ENCODE measurements at regions of chr3 and their contacts with region 1.

Region 1: GRCh38 chr3:156561533-156561932 is 6.6 kb upstream of the SSR3 start:
- DNase-seq: no peak
- ATAC-seq: no peak
- H3K4me3 ChIP-seq: no peak overlapping the region
- H3K27ac ChIP-seq: no peak overlapping the region
- H3K4me1 ChIP-seq: peaks cover 0 to 17% (median 1%) of the 10 kb centered on the region in 12 donors
- H3K27me3 ChIP-seq: peaks cover 0 to 3% (median 0%) of the 10 kb centered on the region in 9 donors
- CTCF ChIP-seq: no peak
- POLR2A ChIP-seq: no peak

Region 2: DNA sequence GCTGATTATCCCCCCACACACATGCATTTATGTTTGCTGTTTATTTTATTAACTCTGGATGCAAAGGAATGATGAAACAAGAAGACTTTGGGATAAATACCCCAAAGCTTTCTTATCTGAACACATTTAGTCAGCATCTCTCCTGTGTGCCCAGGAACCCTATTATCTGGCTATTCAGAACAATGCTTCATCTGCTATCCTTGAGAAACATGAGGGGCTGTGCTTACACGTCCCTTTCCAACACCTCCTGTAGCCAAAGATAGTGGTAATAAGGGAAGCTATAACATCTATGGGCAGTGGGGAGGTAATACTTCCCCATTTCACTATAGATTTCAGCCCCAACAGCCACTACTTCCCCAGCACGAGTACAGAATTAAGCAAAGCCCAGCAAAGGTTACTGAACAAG is 101.3 kb before region 1 on chr3:
- intact Hi-C with region 1: no loop called
- DNase-seq: no peak
- ATAC-seq: no peak
- H3K4me3 ChIP-seq: no peak overlapping the region
- H3K27ac ChIP-seq: no peak overlapping the region
- H3K4me1 ChIP-seq: peaks cover 0 to 17% (median 5%) of the 10 kb centered on the region in 12 donors
- H3K27me3 ChIP-seq: no peaks in the 10 kb centered on the region
- CTCF ChIP-seq: no peak
- POLR2A ChIP-seq: no peak

Region 3: DNA sequence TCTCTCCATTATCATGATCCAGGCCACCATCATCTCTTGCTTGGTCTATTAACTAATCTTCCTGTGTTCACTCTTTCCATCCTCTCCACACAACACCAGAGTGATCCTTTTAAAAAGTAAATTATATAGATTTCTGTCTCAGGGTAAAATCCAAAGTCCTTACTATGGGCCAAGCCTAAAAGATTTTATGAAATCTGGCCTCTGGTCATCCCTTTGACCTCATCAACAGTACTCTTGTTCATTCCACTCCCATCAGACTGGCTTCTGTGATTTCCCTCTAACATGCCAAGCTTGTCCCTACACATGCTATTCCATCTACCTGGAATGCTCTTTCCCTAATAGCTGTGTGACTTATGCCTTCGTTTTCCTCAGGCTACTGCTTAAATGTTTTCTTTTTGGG is 104.5 kb after region 1 on chr3:
- intact Hi-C with region 1: loop called in 2 of 10 experiments (anchors 2 to 5 kb)
- DNase-seq: no peak
- ATAC-seq: no peak
- H3K4me3 ChIP-seq: no peak overlapping the region
- H3K27ac ChIP-seq: peak overlapping the region in 2 of 12 donors; percentile 7 to 74
- H3K4me1 ChIP-seq: peaks cover 0 to 54% (median 0%) of the 10 kb centered on the region in 12 donors
- H3K27me3 ChIP-seq: no peaks in the 10 kb centered on the region
- CTCF ChIP-seq: no peak
- POLR2A ChIP-seq: no peak

Measured in heart left ventricle (tissue), 16 donors.